Ovary (tissue), 10 donors: ENCODE measurements at regions of chr12 and their contacts with region 1.

Region 1: DNA sequence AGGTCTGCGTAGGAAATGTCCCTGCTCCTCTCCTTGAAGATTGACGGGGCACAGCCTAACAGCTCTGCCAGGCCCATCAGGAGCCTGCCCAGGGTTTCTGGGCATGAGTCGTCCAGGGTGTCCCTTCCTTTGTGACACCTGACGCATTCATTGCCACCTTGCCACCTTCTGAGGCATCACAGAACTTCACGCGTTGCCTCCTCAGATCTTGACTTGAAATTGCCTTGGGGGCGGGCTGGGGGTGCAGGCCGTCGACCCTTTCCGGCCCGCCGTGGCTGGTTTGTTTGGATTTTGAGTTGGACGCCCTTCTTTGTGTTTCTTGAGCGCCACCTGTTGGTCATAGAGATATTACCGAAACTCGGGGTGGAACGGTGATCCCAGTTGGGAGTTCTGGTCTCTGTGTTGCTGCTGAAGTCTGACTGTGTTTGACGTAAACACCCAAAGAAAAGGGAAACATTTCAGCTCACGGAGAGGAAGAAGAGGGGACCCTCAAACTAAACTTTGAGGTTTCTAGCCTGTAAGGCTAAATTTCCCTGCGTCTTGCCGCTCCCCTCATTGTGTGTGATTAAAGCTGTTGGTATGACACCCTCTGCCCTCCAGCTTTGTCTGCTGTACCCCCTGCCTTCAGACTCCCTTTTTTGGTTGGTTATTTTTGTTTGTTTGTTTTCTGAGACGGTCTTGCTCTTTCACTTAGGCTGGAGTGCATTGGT is 44.6 kb downstream of the MLXIP start:
- DNase-seq: peak; percentile 70 to 83 (median 79)
- H3K4me3 ChIP-seq: no peak overlapping the region
- H3K27ac ChIP-seq: peak overlapping the region; percentile 16 to 25
- H3K4me1 ChIP-seq: peaks cover 5% of the 10 kb centered on the region
- H3K27me3 ChIP-seq: no peaks in the 10 kb centered on the region
- CTCF ChIP-seq: peak; percentile 73 to 90 (median 90)
- EP300 ChIP-seq: no peak
- POLR2A ChIP-seq: no peak

Region 2: GRCh38 chr12:121802846-121803630 is 320.2 kb before region 1 on chr12:
- intact Hi-C with region 1: loop called in 1 of 4 experiments (anchors 10 kb)
- DNase-seq: peak; percentile 90 to 94 (median 92)
- H3K4me3 ChIP-seq: peak overlapping the region; percentile 77
- H3K27ac ChIP-seq: peak overlapping the region; percentile 100
- H3K4me1 ChIP-seq: peaks cover 19% of the 10 kb centered on the region
- H3K27me3 ChIP-seq: no peaks in the 10 kb centered on the region
- CTCF ChIP-seq: peak in 1 of 3 donors; percentile 7
- EP300 ChIP-seq: no peak
- POLR2A ChIP-seq: peak; percentile 98

Region 3: GRCh38 chr12:121925358-121925695 is 197.9 kb before region 1 on chr12:
- intact Hi-C with region 1: loop called in 1 of 4 experiments (anchors 10 kb)
- DNase-seq: no peak
- H3K4me3 ChIP-seq: peak overlapping the region; percentile 5
- H3K27ac ChIP-seq: peak overlapping the region in 1 of 2 donors; percentile 52
- H3K4me1 ChIP-seq: peaks cover 2% of the 10 kb centered on the region
- H3K27me3 ChIP-seq: no peaks in the 10 kb centered on the region
- CTCF ChIP-seq: no peak
- EP300 ChIP-seq: no peak
- POLR2A ChIP-seq: no peak

Region 4: GRCh38 chr12:122054842-122055520 is 68.2 kb before region 1 on chr12:
- intact Hi-C with region 1: loop called (anchors 2 to 5 kb)
- DNase-seq: no peak
- H3K4me3 ChIP-seq: no peak overlapping the region
- H3K27ac ChIP-seq: no peak overlapping the region
- H3K4me1 ChIP-seq: peaks cover 10% of the 10 kb centered on the region
- H3K27me3 ChIP-seq: no peaks in the 10 kb centered on the region
- CTCF ChIP-seq: no peak
- EP300 ChIP-seq: no peak
- POLR2A ChIP-seq: no peak

Region 5: DNA sequence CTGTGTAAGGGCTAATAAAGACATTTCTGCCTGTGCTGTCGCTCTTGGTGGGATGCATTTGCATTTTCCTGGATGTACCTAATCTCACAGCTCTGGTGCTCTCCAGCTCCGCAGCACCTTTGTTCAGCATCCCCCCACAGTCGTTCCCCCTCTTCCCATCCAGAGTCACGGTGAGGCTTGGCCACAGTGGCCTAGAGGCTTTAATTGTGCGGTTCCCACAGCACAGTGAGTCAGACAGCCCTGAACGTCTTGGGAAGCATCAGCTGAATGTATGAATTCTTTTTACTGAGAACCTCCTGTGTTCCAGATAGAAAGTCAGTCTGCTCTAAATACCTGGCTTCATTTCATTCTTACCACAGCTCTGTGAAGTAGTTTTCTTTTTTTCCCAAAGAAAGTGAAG is 15.9 kb before region 1 on chr12:
- intact Hi-C with region 1: no loop called
- DNase-seq: no peak
- H3K4me3 ChIP-seq: no peak overlapping the region
- H3K27ac ChIP-seq: peak overlapping the region in 1 of 2 donors; percentile 11
- H3K4me1 ChIP-seq: peaks cover 22% of the 10 kb centered on the region
- H3K27me3 ChIP-seq: no peaks in the 10 kb centered on the region
- CTCF ChIP-seq: no peak
- EP300 ChIP-seq: no peak
- POLR2A ChIP-seq: no peak

Region 6: GRCh38 chr12:122366685-122367475 is 243.7 kb after region 1 on chr12:
- intact Hi-C with region 1: no loop called
- DNase-seq: peak in 2 of 5 donors; percentile 39 to 54
- H3K4me3 ChIP-seq: no peak overlapping the region
- H3K27ac ChIP-seq: no peak overlapping the region
- H3K4me1 ChIP-seq: peaks cover 9% of the 10 kb centered on the region
- H3K27me3 ChIP-seq: no peaks in the 10 kb centered on the region
- CTCF ChIP-seq: no peak
- EP300 ChIP-seq: no peak
- POLR2A ChIP-seq: no peak